ENCODE measurements at regions of chr17 and their contacts with region 1.

Region 1: GRCh38 chr17:29777663-29778062 is 152.4 kb downstream of the SSH2 start:
- DNase-seq: no peak
- ATAC-seq: no peak
- H3K4me3 ChIP-seq: no peak overlapping the region
- H3K27ac ChIP-seq: no peak overlapping the region
- H3K4me1 ChIP-seq: no peaks in the 10 kb centered on the region
- H3K27me3 ChIP-seq: no peaks in the 10 kb centered on the region
- CTCF ChIP-seq: no peak
- EP300 ChIP-seq: no peak
- POLR2A ChIP-seq: no peak
- RAD21 ChIP-seq: no peak

Region 2: GRCh38 chr17:29622337-29623282 is 155.1 kb before region 1 on chr17 and contains the start of gene CORO6:
- CTCF ChIA-PET with region 1: interaction called, 114 read pairs
- POLR2A ChIA-PET with region 1: no interaction called
- RAD21 ChIA-PET with region 1: interaction called, 65 read pairs
- SMC1A ChIA-PET with region 1: interaction called, 17 read pairs
- in situ Hi-C with region 1: no loop called
- intact Hi-C with region 1: no loop called
- DNase-seq: no peak
- ATAC-seq: peak; percentile 71
- H3K4me3 ChIP-seq: peak within 1 kb of the TSS; percentile 78
- H3K27ac ChIP-seq: no peak within 1 kb of the TSS
- H3K4me1 ChIP-seq: peaks cover 10% of the 10 kb centered on the region
- H3K27me3 ChIP-seq: no peaks in the 10 kb centered on the region; a peak in 1 of 4 replicates
- CTCF ChIP-seq: no peak
- EP300 ChIP-seq: no peak
- POLR2A ChIP-seq: no peak
- RAD21 ChIP-seq: no peak
- polyA plus RNA-seq, gene CORO6: 0.26 TPM in 1 of 2 experiments, not detected in the other

Region 3: GRCh38 chr17:29645515-29646051 is 132.1 kb before region 1 on chr17:
- CTCF ChIA-PET with region 1: interaction called, 112 read pairs
- POLR2A ChIA-PET with region 1: interaction called, 7 read pairs
- RAD21 ChIA-PET with region 1: interaction called, 133 read pairs
- SMC1A ChIA-PET with region 1: interaction called, 94 read pairs
- in situ Hi-C with region 1: loop called (anchors 5 kb)
- intact Hi-C with region 1: no loop called
- DNase-seq: no peak
- ATAC-seq: no peak
- H3K4me3 ChIP-seq: no peak overlapping the region
- H3K27ac ChIP-seq: no peak overlapping the region
- H3K4me1 ChIP-seq: no peaks in the 10 kb centered on the region; the same call in 1 of the 2 replicates
- H3K27me3 ChIP-seq: no peaks in the 10 kb centered on the region
- CTCF ChIP-seq: no peak
- EP300 ChIP-seq: no peak
- POLR2A ChIP-seq: no peak
- RAD21 ChIP-seq: no peak

Region 4: GRCh38 chr17:29664743-29665480 is 112.8 kb before region 1 on chr17:
- CTCF ChIA-PET with region 1: interaction called, 18 read pairs
- POLR2A ChIA-PET with region 1: interaction called, 4 read pairs
- RAD21 ChIA-PET with region 1: interaction called, 12 read pairs
- SMC1A ChIA-PET with region 1: interaction called, 6 read pairs
- in situ Hi-C with region 1: no loop called
- intact Hi-C with region 1: no loop called
- DNase-seq: no peak
- ATAC-seq: peak; percentile 60
- H3K4me3 ChIP-seq: no peak overlapping the region
- H3K27ac ChIP-seq: peak overlapping the region; percentile 4
- H3K4me1 ChIP-seq: peaks cover 8% of the 10 kb centered on the region
- H3K27me3 ChIP-seq: no peaks in the 10 kb centered on the region
- CTCF ChIP-seq: no peak
- EP300 ChIP-seq: no peak
- POLR2A ChIP-seq: no peak
- RAD21 ChIP-seq: no peak

Region 5: GRCh38 chr17:29687596-29687995 is 90.1 kb before region 1 on chr17:
- CTCF ChIA-PET with region 1: interaction called, 34 read pairs
- POLR2A ChIA-PET with region 1: no interaction called
- RAD21 ChIA-PET with region 1: interaction called, 15 read pairs
- SMC1A ChIA-PET with region 1: interaction called, 55 read pairs
- in situ Hi-C with region 1: no loop called
- intact Hi-C with region 1: loop called (anchors 5 kb)
- DNase-seq: no peak
- ATAC-seq: no peak
- H3K4me3 ChIP-seq: no peak overlapping the region
- H3K27ac ChIP-seq: no peak overlapping the region
- H3K4me1 ChIP-seq: 0 out of 2 replicates have a peak, but pooled peaks cover 2% of the 10 kb centered on the region
- H3K27me3 ChIP-seq: no peaks in the 10 kb centered on the region
- CTCF ChIP-seq: no peak
- EP300 ChIP-seq: no peak
- POLR2A ChIP-seq: no peak
- RAD21 ChIP-seq: no peak

Region 6: DNA sequence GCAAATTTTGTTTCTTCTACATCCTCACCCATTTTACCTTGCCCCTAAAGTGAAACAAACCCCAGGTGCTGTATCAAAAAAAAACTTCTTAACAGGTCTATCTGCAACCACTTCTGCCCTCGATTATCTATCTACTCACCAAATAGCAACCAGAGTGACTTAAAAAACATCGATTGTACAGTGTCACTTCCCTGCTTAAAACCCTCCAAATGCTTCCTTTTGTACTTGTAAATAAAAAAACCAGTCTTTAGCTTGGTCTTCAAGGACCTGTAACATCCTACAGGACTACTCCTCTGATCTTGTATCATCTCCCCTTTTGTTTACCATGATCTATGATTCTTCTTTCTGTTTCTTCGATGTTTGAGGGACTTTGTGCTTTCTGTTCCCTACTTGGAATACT is 72.3 kb before region 1 on chr17:
- CTCF ChIA-PET with region 1: interaction called, 23 read pairs
- POLR2A ChIA-PET with region 1: interaction called, 6 read pairs
- RAD21 ChIA-PET with region 1: interaction called, 13 read pairs
- SMC1A ChIA-PET with region 1: interaction called, 38 read pairs
- in situ Hi-C with region 1: no loop called
- intact Hi-C with region 1: no loop called
- DNase-seq: no peak
- ATAC-seq: peak; percentile 7; the same call in 2 of the 3 replicates
- H3K4me3 ChIP-seq: peak overlapping the region; percentile 43; the same call in 1 of the 2 replicates
- H3K27ac ChIP-seq: peak overlapping the region; percentile 91
- H3K4me1 ChIP-seq: peaks cover 29% of the 10 kb centered on the region
- H3K27me3 ChIP-seq: no peaks in the 10 kb centered on the region
- CTCF ChIP-seq: no peak
- EP300 ChIP-seq: no peak
- POLR2A ChIP-seq: no peak
- RAD21 ChIP-seq: no peak

Region 7: GRCh38 chr17:29760761-29761696 is 16.6 kb before region 1 on chr17:
- CTCF ChIA-PET with region 1: interaction called, 25 read pairs
- POLR2A ChIA-PET with region 1: interaction called, 5 read pairs
- RAD21 ChIA-PET with region 1: interaction called, 8 read pairs
- SMC1A ChIA-PET with region 1: interaction called, 33 read pairs
- in situ Hi-C with region 1: no loop called
- intact Hi-C with region 1: no loop called
- DNase-seq: peak; percentile 55
- ATAC-seq: peak; percentile 92
- H3K4me3 ChIP-seq: peak overlapping the region; percentile 88
- H3K27ac ChIP-seq: peak overlapping the region; percentile 90
- H3K4me1 ChIP-seq: peaks cover 11% of the 10 kb centered on the region; the same call in 1 of the 2 replicates
- H3K27me3 ChIP-seq: no peaks in the 10 kb centered on the region
- CTCF ChIP-seq: no peak
- EP300 ChIP-seq: 0 out of 4 replicates have a peak, but pooled peaks of 1 of the 2 experiments have one; percentile 4
- POLR2A ChIP-seq: peak; percentile 91
- RAD21 ChIP-seq: no peak

Region 8: GRCh38 chr17:29909236-29910003 is 131.8 kb after region 1 on chr17:
- CTCF ChIA-PET with region 1: no interaction called
- POLR2A ChIA-PET with region 1: no interaction called
- RAD21 ChIA-PET with region 1: no interaction called
- SMC1A ChIA-PET with region 1: no interaction called
- in situ Hi-C with region 1: no loop called
- intact Hi-C with region 1: no loop called
- DNase-seq: no peak
- ATAC-seq: peak; percentile 46; the same call in 2 of the 3 replicates
- H3K4me3 ChIP-seq: no peak overlapping the region
- H3K27ac ChIP-seq: no peak overlapping the region
- H3K4me1 ChIP-seq: no peaks in the 10 kb centered on the region
- H3K27me3 ChIP-seq: no peaks in the 10 kb centered on the region
- CTCF ChIP-seq: no peak
- EP300 ChIP-seq: no peak
- POLR2A ChIP-seq: no peak
- RAD21 ChIP-seq: no peak